B cell (primary cell): ENCODE measurements at regions of chr3 and their contacts with region 1.

Region 1: DNA sequence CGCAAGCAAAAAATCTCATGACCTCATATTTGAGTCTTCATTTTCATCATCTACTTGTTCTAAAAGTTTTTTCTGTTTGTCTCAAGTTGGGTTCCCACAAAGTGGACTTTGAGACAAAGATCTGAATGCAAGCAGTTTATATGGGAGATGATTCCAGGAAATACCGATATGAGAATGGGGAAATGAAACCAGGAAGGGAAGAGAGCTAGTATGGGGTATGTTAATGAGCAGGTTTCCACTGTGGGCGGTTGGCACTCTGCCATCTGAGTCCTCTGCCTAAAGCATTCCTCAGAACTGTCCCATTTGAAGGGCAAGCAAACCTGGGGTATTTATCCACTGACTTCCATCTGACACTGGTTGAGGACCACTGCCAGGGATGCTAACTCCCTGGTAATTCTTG is 8.8 kb downstream of the ADPRH start:
- DNase-seq: peak; percentile 67
- ATAC-seq: peak; percentile 62
- H3K4me3 ChIP-seq: no peak overlapping the region
- H3K4me3 Mint-ChIP-seq: peak overlapping the region; percentile 73
- H3K27ac ChIP-seq: no peak overlapping the region
- H3K27ac Mint-ChIP-seq: peak overlapping the region; percentile 77
- H3K4me1 ChIP-seq: peaks cover 19 to 22% of the 10 kb centered on the region in 2 donors
- H3K4me1 Mint-ChIP-seq: peaks cover 39% of the 10 kb centered on the region
- H3K27me3 ChIP-seq: no peaks in the 10 kb centered on the region
- H3K27me3 Mint-ChIP-seq: no peaks in the 10 kb centered on the region
- CTCF ChIP-seq: no peak

Region 2: GRCh38 chr3:119550192-119550910 is 37.8 kb before region 1 on chr3:
- CTCF ChIA-PET with region 1: no interaction called
- POLR2A ChIA-PET with region 1: no interaction called
- intact Hi-C with region 1: loop called (anchors 5 kb)
- DNase-seq: no peak
- ATAC-seq: no peak
- H3K4me3 ChIP-seq: no peak overlapping the region
- H3K4me3 Mint-ChIP-seq: peak overlapping the region; percentile 66
- H3K27ac ChIP-seq: no peak overlapping the region
- H3K27ac Mint-ChIP-seq: peak overlapping the region; percentile 82
- H3K4me1 ChIP-seq: peaks cover 12 to 40% of the 10 kb centered on the region in 2 donors
- H3K4me1 Mint-ChIP-seq: peaks cover 76% of the 10 kb centered on the region
- H3K27me3 ChIP-seq: no peaks in the 10 kb centered on the region
- H3K27me3 Mint-ChIP-seq: no peaks in the 10 kb centered on the region
- CTCF ChIP-seq: no peak

Region 3: GRCh38 chr3:119628816-119629445 is 40.8 kb after region 1 on chr3:
- CTCF ChIA-PET with region 1: no interaction called
- POLR2A ChIA-PET with region 1: no interaction called
- intact Hi-C with region 1: loop called (anchors 5 kb)
- DNase-seq: peak; percentile 76
- ATAC-seq: peak; percentile 61
- H3K4me3 ChIP-seq: no peak overlapping the region
- H3K4me3 Mint-ChIP-seq: peak overlapping the region; percentile 73
- H3K27ac ChIP-seq: peak overlapping the region; percentile 26 to 83
- H3K27ac Mint-ChIP-seq: peak overlapping the region; percentile 90
- H3K4me1 ChIP-seq: peaks cover 29 to 30% of the 10 kb centered on the region in 2 donors
- H3K4me1 Mint-ChIP-seq: peaks cover 46% of the 10 kb centered on the region
- H3K27me3 ChIP-seq: no peaks in the 10 kb centered on the region
- H3K27me3 Mint-ChIP-seq: no peaks in the 10 kb centered on the region
- CTCF ChIP-seq: no peak

Region 4: DNA sequence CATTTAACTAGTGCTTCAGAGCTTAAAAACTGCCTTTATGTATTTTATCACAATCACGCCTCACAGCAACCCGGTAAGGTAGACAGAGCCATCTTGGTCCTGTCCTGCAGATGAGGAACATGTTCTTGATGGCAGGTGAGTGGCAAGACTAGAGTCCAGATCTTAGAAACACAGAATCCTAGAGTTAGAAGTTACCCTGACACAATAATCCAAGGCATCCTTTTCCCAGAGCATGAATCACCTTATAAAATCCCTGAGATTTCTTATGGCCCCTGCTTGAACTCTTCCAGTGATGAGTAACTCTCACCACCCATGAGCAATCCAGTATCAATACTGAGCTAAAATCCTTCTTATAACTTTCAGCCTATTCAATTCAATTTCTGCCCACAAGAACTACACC is 55.4 kb after region 1 on chr3:
- CTCF ChIA-PET with region 1: no interaction called
- POLR2A ChIA-PET with region 1: no interaction called
- intact Hi-C with region 1: no loop called
- DNase-seq: no peak
- ATAC-seq: no peak
- H3K4me3 ChIP-seq: no peak overlapping the region
- H3K4me3 Mint-ChIP-seq: no peak overlapping the region
- H3K27ac ChIP-seq: no peak overlapping the region
- H3K27ac Mint-ChIP-seq: no peak overlapping the region
- H3K4me1 ChIP-seq: peaks cover 8 to 9% of the 10 kb centered on the region in 2 donors
- H3K4me1 Mint-ChIP-seq: peaks cover 12% of the 10 kb centered on the region
- H3K27me3 ChIP-seq: no peaks in the 10 kb centered on the region
- H3K27me3 Mint-ChIP-seq: no peaks in the 10 kb centered on the region
- CTCF ChIP-seq: no peak